PC-3 (cell line): ENCODE measurements at regions of chr1 and their contacts with region 1.

Region 1: GRCh38 chr1:159009704-159010361 is at the start of gene IFI16:
- DNase-seq: peak; percentile 48
- ATAC-seq: peak; percentile 90
- H3K4me3 ChIP-seq: peak within 1 kb of the TSS; percentile 24
- H3K27ac ChIP-seq: 0 out of 2 replicates have a peak within 1 kb of the TSS, but pooled peaks have one; percentile 4
- H3K4me1 ChIP-seq: 0 out of 2 replicates have a peak, but pooled peaks cover 3% of the 10 kb centered on the region
- H3K27me3 ChIP-seq: peaks cover 11% of the 10 kb centered on the region
- CTCF ChIP-seq: no peak
- total RNA-seq, gene IFI16: 0.98 and 1.3 TPM in 2 replicates

Region 2: DNA sequence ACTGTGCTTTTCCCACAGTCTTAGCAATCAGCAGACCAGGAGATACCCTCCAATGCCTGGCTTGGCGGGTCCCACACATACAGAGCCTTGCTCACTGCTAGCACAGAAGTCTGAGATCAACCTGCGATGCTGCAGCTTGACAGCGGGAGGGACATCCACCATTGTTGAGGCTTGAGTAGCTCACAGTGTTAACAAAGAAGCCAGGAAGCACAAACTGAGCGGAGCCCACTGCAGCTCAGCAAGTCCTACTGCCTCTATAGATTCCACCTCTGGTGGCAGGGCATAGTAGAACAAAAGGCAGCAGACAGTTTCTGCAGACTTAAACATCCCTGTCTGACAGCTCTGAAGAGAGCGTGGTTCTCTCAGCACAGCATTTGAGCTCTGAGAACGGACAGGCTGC is 145.2 kb before region 1 on chr1:
- CTCF ChIA-PET with region 1: no interaction called
- POLR2A ChIA-PET with region 1: no interaction called
- intact Hi-C with region 1: no loop called
- DNase-seq: no peak
- ATAC-seq: no peak
- H3K4me3 ChIP-seq: no peak overlapping the region
- H3K27ac ChIP-seq: no peak overlapping the region
- H3K4me1 ChIP-seq: no peaks in the 10 kb centered on the region
- H3K27me3 ChIP-seq: no peaks in the 10 kb centered on the region
- CTCF ChIP-seq: no peak

Region 3: DNA sequence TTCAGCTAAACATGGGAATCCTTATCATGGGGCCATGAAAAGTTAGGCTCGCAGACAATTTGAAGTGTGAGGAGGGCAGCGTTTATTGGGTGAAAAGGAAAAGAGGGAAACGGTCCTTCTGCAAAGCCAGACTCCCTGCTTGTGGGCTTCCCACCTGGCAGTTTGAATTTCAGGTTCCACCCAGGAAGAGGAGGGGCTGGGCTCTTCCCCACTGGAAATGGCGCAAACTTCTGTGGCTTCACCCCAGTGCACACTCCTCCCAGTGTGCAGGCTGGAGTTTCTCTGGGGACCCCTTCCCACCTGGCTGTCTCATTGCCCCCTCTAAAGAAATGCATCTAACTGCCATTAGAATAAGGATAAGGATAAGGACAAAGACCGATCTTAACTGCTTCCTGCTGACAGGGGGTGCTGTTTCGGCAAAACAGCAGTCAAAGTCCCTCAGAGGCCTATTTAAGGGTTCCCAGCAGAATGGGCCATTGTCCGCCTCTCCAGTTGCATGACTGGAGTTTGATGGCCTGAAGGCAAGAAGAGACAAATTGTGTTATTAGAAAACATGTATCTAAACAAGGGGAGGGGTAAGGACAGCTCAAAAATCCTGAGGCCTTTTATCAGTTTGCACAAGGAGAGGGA is 46.4 kb after region 1 on chr1:
- CTCF ChIA-PET with region 1: no interaction called
- POLR2A ChIA-PET with region 1: no interaction called
- intact Hi-C with region 1: loop called (anchors 5 kb)
- DNase-seq: no peak
- ATAC-seq: no peak
- H3K4me3 ChIP-seq: no peak overlapping the region
- H3K27ac ChIP-seq: no peak overlapping the region
- H3K4me1 ChIP-seq: no peaks in the 10 kb centered on the region
- H3K27me3 ChIP-seq: peaks cover 19% of the 10 kb centered on the region; the same call in 1 of the 2 replicates
- CTCF ChIP-seq: no peak; the same call in 1 of the 2 replicates